MCF 10A (cell line): ENCODE measurements at regions of chr3 and their contacts with region 1.

Region 1: GRCh38 chr3:183884427-183885296 is at the start of gene PARL:
- DNase-seq: peak; percentile 92
- H3K4me3 Mint-ChIP-seq: peak within 1 kb of the TSS; percentile 93
- H3K27ac Mint-ChIP-seq: peak within 1 kb of the TSS; percentile 88
- H3K4me1 Mint-ChIP-seq: peaks cover 13% of the 10 kb centered on the region
- H3K27me3 Mint-ChIP-seq: no peaks in the 10 kb centered on the region
- CTCF ChIP-seq: peak; percentile 91
- total RNA-seq, gene PARL: 73.5 and 88.0 TPM in 2 replicates

Region 2: GRCh38 chr3:183122257-183122932 is 762.3 kb before region 1 on chr3:
- CTCF ChIA-PET with region 1: no interaction called
- POLR2A ChIA-PET with region 1: no interaction called
- intact Hi-C with region 1: loop called (anchors 5 kb)
- DNase-seq: peak; percentile 59
- H3K4me3 Mint-ChIP-seq: no peak overlapping the region
- H3K27ac Mint-ChIP-seq: no peak overlapping the region
- H3K4me1 Mint-ChIP-seq: no peaks in the 10 kb centered on the region
- H3K27me3 Mint-ChIP-seq: peaks cover 12% of the 10 kb centered on the region
- CTCF ChIP-seq: peak; percentile 57

Region 3: DNA sequence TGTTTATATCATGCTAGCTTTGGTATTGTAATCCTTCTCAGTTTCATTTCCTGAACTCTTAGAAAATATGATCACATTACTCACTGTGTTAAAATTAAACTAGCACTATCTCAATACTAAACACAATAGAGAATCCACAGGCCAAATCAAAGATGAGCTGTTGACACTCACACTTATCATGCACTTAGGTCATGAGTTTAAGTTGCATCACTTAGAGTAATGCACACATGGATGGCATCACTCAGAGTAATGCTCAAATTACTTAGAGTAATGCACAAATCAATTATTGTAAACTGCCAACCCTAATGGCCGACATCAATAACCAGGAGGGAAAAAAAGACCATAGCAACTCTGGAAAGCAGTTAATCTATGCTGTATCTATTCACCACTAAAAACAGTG is 416.2 kb before region 1 on chr3:
- CTCF ChIA-PET with region 1: interaction called, 3 read pairs
- POLR2A ChIA-PET with region 1: no interaction called
- intact Hi-C with region 1: loop called (anchors 1 kb)
- DNase-seq: no peak
- H3K4me3 Mint-ChIP-seq: no peak overlapping the region
- H3K27ac Mint-ChIP-seq: no peak overlapping the region
- H3K4me1 Mint-ChIP-seq: no peaks in the 10 kb centered on the region
- H3K27me3 Mint-ChIP-seq: no peaks in the 10 kb centered on the region
- CTCF ChIP-seq: no peak

Region 4: DNA sequence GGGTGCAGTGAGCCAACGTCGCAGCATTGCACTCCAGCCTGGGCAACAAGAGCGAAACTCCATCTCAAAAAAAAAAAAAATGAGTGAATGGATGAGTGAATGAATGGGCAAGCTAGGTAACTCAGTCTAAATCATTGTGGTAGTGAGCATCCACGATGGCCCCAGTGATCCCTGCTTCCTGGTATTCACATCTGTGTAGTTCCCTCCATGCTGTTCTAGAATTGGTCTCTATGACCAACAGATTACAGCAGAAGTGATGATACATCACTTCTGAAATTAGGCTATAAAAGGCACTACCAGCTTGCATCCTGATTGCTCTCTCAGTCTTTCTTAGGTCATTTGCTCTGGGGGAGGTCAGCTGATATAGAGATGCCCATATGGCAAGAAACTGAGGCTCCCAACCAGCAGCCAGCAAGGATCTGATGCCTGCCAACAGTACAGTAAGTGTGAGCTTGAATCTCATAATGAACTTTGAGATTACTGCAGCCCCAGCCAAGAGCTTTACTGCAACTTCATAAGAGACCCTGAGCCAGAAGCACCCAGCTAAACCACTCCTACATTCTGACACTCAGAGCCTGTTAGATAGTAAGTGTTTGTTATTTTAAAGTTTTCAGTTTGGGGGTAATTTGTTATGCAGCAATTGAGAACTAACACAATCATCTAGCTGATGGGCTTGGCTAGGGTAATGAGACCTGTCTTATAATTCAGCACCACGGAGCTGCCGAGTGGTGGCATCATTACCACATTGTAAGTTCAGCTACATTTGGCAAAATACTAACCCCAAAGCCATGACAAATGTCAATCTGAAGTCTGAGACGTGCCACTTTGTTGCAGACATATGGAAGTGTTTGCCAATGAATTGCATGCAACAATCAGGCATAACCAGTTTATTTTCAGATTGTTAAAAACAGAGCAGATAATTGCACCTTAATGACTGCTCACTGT is 382.2 kb before region 1 on chr3:
- CTCF ChIA-PET with region 1: no interaction called
- POLR2A ChIA-PET with region 1: no interaction called
- intact Hi-C with region 1: loop called (anchors 10 kb)
- DNase-seq: peak; percentile 27
- H3K4me3 Mint-ChIP-seq: no peak overlapping the region
- H3K27ac Mint-ChIP-seq: no peak overlapping the region
- H3K4me1 Mint-ChIP-seq: peaks cover 4% of the 10 kb centered on the region
- H3K27me3 Mint-ChIP-seq: no peaks in the 10 kb centered on the region
- CTCF ChIP-seq: peak; percentile 34

Region 5: DNA sequence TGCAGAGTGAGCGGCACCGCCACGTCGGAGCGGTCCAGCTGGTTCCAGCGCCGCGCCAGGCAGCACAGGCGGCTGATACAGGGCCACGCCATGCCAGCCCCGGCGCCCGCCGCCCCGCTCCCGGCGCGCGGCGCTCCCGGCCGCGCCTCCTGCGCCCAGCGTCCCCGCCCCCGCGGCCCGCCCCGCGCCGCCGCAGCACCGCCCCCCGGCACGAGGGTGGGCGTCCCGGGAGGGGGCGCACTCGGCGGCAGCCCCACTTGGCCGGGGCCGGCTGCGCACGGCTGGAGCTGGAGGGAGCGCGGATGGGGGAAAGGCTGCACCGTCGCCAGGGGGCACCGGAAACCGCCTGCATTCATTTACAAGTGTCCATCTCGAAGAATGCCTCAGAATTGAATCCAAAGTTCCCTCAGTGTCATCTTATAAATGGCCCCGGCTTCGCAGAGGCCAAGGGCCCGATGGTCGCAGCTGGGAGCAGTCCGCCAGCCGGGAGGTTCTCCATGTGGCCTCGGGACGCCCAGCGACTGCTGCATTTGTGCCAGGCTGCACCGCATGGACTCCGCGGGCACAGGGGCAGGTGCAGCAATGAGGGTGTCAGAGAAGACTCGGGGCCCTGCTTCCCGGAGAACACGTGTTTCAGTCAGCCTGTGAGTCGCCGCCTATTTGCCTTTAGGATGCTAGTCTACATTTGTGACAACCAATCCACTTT is 59.1 kb before region 1 on chr3 and contains the start of gene MAP6D1:
- CTCF ChIA-PET with region 1: interaction called, 10 read pairs
- POLR2A ChIA-PET with region 1: interaction called, 7 read pairs
- intact Hi-C with region 1: loop called (anchors 2 kb)
- DNase-seq: peak; percentile 28
- H3K4me3 Mint-ChIP-seq: peak within 1 kb of the TSS; percentile 56
- H3K27ac Mint-ChIP-seq: no peak within 1 kb of the TSS
- H3K4me1 Mint-ChIP-seq: no peaks in the 10 kb centered on the region
- H3K27me3 Mint-ChIP-seq: no peaks in the 10 kb centered on the region
- CTCF ChIP-seq: peak; percentile 29
- total RNA-seq, gene MAP6D1: 1.1 and 1.9 TPM in 2 replicates

Region 6: DNA sequence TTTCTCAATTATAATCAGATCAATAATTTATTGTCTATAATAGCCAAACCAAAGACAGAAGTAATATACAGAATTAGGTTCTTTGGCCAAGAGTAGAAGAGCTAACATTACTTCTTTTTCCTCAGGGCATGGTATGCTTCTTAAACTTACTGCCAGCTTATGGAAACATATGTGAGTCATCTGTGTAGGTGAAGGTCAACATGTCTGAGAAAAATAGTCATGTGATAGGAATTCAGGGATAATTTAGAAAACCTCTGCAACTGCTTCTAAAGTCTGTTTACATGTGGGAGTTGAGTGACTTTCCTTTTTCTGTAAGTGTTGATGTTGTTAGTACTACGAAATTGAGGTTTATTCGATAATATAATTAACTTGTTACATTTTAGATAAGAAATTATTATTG is 40.1 kb before region 1 on chr3:
- CTCF ChIA-PET with region 1: interaction called, 4 read pairs
- POLR2A ChIA-PET with region 1: interaction called, 10 read pairs
- intact Hi-C with region 1: no loop called
- DNase-seq: peak; percentile 81
- H3K4me3 Mint-ChIP-seq: no peak overlapping the region
- H3K27ac Mint-ChIP-seq: peak overlapping the region; percentile 84
- H3K4me1 Mint-ChIP-seq: peaks cover 17% of the 10 kb centered on the region
- H3K27me3 Mint-ChIP-seq: no peaks in the 10 kb centered on the region
- CTCF ChIP-seq: no peak

Region 7: DNA sequence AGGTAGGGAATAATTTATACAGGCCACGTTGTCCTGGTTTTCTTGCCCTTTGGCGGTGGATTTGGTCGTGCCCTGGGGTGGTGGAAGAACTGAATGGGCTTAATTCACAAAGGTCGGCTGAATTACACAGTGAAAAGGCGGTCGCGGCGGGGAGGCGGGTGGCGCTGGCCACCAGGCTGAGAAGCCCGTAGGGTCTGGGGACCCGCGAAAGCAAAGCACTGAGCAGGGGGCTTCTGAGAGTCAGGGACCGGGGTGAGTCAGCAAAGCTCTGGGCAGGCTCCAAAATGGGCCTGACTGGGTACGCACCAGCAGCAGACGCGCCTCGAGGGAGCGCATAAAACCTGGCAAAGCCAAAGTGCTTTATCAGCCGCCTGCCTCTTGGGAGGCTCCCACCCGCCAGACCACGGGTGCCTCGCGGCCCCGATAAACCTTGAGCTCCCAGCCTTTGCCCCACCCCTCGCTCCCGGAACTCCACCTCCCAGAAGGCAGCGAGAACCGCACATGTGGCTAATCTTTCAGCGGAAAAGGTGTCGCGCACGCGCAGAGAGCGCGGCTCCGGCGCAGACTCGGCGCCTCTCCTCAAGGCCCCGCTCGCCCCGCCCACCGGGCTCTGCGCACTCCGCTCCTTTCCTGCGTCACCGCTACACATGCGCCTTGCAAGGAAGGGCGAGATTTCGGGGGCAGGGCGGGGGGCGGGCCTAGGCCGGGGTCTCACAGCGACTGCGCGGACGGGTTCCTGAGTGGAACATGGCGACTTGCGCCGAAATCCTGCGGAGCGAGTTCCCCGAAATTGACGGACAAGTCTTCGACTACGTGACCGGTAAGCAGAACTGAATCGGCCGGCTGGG is 301.0 kb after region 1 on chr3 and contains the start of gene ABCF3:
- CTCF ChIA-PET with region 1: no interaction called
- POLR2A ChIA-PET with region 1: interaction called, 10 read pairs
- intact Hi-C with region 1: no loop called
- DNase-seq: peak; percentile 98
- H3K4me3 Mint-ChIP-seq: peak within 1 kb of the TSS; percentile 95
- H3K27ac Mint-ChIP-seq: peak within 1 kb of the TSS; percentile 93
- H3K4me1 Mint-ChIP-seq: peaks cover 19% of the 10 kb centered on the region
- H3K27me3 Mint-ChIP-seq: no peaks in the 10 kb centered on the region
- CTCF ChIP-seq: no peak
- total RNA-seq, gene ABCF3: 62.7 and 73.9 TPM in 2 replicates